ENCODE measurements at regions of chr9 and their contacts with region 1.

Region 1: DNA sequence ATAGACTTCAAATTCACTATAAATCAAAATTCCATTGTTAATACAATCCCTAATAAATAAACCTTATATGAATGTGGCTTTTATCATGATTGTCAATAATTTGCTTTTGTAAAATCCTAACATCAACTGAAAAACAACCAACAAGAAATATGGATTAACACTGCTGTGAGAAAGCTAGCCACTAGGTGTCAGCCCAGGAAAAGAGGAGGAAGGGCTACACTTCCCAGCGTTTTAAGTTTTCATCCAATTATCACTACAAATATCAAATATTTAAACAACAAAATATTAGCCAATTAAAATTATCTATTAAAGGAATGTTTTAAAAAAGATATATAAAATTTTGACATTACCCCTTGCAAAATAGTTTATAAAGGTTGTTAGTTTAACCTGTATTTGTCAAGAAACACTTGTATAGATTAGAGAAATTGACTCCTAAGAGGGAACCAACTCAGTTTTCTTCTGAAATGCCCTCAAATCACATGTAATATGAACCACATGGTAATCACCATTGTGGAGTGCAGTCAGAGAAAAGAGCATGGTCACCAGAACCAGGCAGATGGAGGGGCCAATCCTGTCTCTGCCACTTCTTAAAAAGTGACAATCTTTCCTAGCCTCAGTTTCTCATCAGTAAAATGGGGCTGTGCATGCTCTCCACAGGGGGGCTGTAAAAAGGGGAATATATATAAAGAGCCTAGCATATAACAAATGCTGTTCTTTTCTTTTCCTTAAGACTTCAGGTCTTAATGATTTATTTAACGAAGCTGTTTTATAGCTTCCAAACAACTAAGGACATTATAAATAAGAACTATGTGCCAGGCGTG is 188.2 kb downstream of the CRB2 start:
- DNase-seq: peak in 1 of 2 donors; percentile 38
- H3K4me3 ChIP-seq: no peak overlapping the region
- H3K27ac ChIP-seq: no peak overlapping the region
- H3K4me1 ChIP-seq: peaks cover 0 to 12% of the 10 kb centered on the region in 2 donors
- H3K27me3 ChIP-seq: no peaks in the 10 kb centered on the region
- CTCF ChIP-seq: peak; percentile 59 to 95 (median 86)
- POLR2A ChIP-seq: no peak

Region 2: DNA sequence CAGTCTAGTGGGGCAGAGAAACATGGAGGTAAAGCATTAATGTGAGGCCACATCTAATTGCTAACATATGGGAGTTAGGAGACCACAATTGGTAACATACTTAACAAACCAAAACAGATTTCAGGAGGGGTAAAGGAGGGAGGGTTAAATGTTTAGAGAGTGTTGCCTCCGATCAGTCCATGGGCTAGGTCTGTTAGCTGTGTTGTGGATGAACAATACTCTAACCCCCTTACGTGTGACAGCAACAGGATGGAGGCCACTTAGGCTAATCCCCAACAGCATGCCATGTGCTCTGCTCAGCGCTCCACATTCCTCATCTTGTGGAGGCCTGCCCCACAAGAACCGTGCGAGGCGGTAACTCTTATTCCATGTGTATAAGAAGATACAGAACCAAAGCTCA is 21.2 kb before region 1 on chr9:
- intact Hi-C with region 1: no loop called
- DNase-seq: no peak
- H3K4me3 ChIP-seq: no peak overlapping the region
- H3K27ac ChIP-seq: no peak overlapping the region
- H3K4me1 ChIP-seq: peaks cover 4 to 8% of the 10 kb centered on the region in 2 donors
- H3K27me3 ChIP-seq: no peaks in the 10 kb centered on the region
- CTCF ChIP-seq: no peak
- POLR2A ChIP-seq: no peak

Region 3: DNA sequence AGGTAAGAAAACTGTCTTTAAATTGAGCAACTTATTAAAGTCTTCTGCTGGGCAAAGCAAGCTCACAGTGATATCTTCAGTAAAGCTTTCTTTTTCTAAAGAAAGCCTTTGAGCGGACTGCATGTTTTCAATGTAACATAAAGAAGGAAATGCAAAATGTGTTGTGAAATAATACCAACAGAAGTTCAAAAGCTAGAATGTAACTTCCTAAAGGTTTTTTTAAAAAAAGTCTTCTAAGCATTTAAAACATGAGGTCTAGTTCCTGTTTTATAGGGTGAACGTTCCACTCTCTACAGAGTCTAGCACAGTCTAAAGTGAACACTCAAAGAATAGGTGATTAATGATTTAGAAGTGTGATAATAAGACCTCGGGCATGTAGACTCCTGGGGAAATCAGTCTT is 322.8 kb after region 1 on chr9:
- intact Hi-C with region 1: loop called (anchors 5 kb)
- DNase-seq: no peak
- H3K4me3 ChIP-seq: no peak overlapping the region
- H3K27ac ChIP-seq: no peak overlapping the region
- H3K4me1 ChIP-seq: no peaks in the 10 kb centered on the region
- H3K27me3 ChIP-seq: no peaks in the 10 kb centered on the region
- CTCF ChIP-seq: no peak
- POLR2A ChIP-seq: no peak

Region 4: DNA sequence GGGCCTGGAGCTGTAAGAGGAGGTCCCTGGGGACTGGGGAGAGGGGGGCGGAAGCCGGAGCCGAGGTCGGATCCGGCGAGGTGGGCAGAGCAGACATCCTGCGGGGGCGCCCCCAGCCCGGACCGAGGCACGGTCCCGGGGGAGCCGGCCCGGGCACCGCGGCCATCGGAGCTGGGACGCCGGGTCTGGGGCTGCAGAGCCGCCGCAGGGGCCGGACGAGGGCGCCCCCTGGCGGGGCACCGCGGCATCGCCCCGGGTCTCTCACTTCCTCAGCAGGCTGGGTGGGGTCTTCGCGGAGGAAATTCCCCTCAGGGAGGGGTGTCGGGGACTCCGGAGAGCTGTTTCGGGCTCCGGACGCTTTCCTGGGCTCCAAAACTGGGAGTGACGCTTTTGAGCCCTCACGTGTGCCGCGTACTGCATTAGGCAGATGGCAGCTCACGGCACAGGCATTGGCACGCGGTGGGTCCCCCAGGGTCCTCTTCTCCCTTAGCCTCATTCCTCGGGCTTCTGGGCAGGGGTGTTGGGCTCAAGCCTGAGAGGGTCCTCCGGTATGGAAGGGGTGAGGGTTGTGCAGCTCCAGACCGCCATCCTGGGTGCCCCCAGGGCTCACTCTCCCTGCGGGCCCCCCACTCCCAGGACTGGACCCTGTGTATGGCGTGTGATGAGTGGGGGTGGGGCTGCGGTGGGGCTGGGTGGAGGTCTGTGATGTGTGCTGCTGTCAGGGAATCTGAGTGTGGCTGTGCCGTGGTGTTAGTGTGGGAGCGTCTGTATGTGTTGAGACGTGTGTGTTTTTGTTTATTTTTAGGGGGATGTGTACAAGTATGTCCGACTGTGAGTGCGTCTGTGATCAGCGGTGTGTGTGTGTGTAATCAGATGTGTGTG is 497.0 kb after region 1 on chr9:
- intact Hi-C with region 1: loop called (anchors 5 kb)
- DNase-seq: peak; percentile 38 to 41
- H3K4me3 ChIP-seq: peak overlapping the region in 1 of 3 donors; percentile 28
- H3K27ac ChIP-seq: no peak overlapping the region
- H3K4me1 ChIP-seq: peaks cover 15 to 24% of the 10 kb centered on the region in 2 donors
- H3K27me3 ChIP-seq: peaks cover 13% of the 10 kb centered on the region
- CTCF ChIP-seq: peak; percentile 46 to 99 (median 84)
- POLR2A ChIP-seq: no peak